ENCODE measurements at regions of chr7 and their contacts with region 1.

Region 1: GRCh38 chr7:105691733-105692564 is 110.7 kb upstream of the EFCAB10 start:
- DNase-seq: peak; percentile 84 to 95 (median 91)
- H3K4me3 ChIP-seq: peak overlapping the region; percentile 71 to 75
- H3K4me3 Mint-ChIP-seq: peak overlapping the region; percentile 91 to 98 (median 94)
- H3K27ac ChIP-seq: peak overlapping the region; percentile 89
- H3K27ac Mint-ChIP-seq: peak overlapping the region; percentile 96 to 100 (median 98)
- H3K4me1 ChIP-seq: peaks cover 44% of the 10 kb centered on the region
- H3K4me1 Mint-ChIP-seq: peaks cover 29 to 78% (median 57%) of the 10 kb centered on the region in 4 donors
- H3K27me3 ChIP-seq: no peaks in the 10 kb centered on the region
- H3K27me3 Mint-ChIP-seq: no peaks in the 10 kb centered on the region

Region 2: DNA sequence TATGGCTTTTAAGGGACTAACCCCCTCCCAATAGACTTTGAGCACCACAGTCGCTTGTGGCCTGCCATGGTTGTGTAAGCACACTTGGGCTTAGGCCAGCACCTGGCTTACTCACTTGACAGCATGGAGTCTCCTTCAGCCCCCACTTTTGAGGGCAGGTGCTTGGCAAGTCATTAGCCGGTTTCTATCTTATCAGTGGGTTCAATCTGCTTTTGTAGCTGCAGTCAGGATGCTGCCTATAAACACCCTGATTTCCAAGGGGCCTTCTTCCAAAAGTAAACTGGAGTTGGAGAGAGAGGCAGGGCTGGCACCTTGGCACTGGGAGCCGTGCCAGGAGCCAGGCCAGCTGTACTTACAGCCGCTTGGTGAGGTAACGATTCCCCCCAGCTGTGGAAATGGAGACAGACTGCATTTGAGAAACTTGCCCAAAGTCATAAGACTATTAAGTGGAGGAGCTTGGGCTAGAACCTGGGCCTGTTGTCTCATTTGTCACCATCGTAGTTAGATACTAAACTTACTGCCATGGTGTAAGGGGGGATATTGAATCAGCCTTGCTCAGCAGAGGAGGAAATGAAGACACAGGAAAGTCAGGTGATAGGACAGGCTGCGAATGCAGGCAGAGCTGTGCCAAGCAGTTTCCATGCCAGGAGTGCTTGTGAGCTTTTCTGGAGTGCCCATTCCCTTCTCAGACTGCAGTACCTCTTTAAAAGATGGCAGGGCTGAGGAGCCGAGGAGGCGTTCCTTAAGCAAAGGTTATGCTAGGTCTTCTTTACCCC is 18.4 kb before region 1 on chr7:
- CTCF ChIA-PET with region 1: interaction called, 14 read pairs
- POLR2A ChIA-PET with region 1: interaction called, 113 read pairs
- intact Hi-C with region 1: loop called (anchors 1 kb)
- DNase-seq: peak in 1 of 5 donors; percentile 61
- H3K4me3 ChIP-seq: no peak overlapping the region
- H3K4me3 Mint-ChIP-seq: peak overlapping the region in 6 of 8 donors; percentile 3 to 78 (median 24)
- H3K27ac ChIP-seq: peak overlapping the region; percentile 36
- H3K27ac Mint-ChIP-seq: peak overlapping the region; percentile 58 to 97 (median 85)
- H3K4me1 ChIP-seq: peaks cover 63% of the 10 kb centered on the region
- H3K4me1 Mint-ChIP-seq: peaks cover 49 to 73% (median 62%) of the 10 kb centered on the region in 4 donors
- H3K27me3 ChIP-seq: no peaks in the 10 kb centered on the region
- H3K27me3 Mint-ChIP-seq: no peaks in the 10 kb centered on the region

Region 3: DNA sequence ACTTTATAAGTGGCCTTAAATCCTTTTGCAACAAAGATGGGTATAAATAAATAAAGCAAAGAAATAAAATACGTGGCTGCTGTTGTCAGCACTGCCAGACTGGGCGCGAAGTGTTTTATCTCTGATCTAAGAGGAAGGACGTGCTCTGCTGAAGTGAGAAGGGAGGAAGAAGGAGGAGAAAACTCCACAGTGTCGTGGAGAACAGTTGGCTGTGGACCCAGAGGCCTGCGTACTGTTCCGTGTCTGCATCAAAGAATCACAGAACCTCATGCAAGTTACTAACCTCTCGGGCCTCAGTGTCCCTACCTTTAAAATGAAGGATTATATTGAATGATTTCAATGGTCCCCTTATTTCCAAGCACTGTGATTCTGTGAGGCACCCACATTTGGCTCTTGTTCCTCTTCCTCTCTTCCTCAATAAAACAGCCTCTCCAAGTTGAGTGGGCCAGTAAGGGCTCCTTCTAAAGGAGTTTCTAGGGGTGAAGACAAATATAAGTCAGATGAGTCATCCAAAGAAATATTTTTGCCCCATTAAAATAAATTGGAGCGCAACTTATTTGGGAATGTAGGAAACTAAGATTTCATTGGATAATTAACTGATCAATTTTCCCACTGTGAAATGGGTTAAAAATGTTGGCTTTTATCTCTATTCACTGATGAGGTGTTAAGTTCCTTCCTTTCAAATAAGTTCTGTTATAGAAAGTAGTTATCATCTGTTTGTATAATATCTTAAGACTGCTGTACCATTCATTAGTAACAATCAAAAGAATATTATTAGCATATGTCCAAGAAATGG is 16.2 kb after region 1 on chr7:
- CTCF ChIA-PET with region 1: interaction called, 4 read pairs
- POLR2A ChIA-PET with region 1: interaction called, 6 read pairs
- intact Hi-C with region 1: loop called (anchors 2 kb)
- DNase-seq: peak in 3 of 5 donors; percentile 20 to 25 (median 24)
- H3K4me3 ChIP-seq: no peak overlapping the region
- H3K4me3 Mint-ChIP-seq: peak overlapping the region; percentile 45 to 84 (median 60)
- H3K27ac ChIP-seq: no peak overlapping the region
- H3K27ac Mint-ChIP-seq: peak overlapping the region; percentile 11 to 81 (median 66)
- H3K4me1 ChIP-seq: peaks cover 19% of the 10 kb centered on the region
- H3K4me1 Mint-ChIP-seq: peaks cover 15 to 21% (median 18%) of the 10 kb centered on the region in 4 donors
- H3K27me3 ChIP-seq: no peaks in the 10 kb centered on the region
- H3K27me3 Mint-ChIP-seq: no peaks in the 10 kb centered on the region

Region 4: GRCh38 chr7:105849122-105849855 is 157.3 kb after region 1 on chr7:
- CTCF ChIA-PET with region 1: no interaction called
- POLR2A ChIA-PET with region 1: interaction called, 19 read pairs
- intact Hi-C with region 1: no loop called
- DNase-seq: peak; percentile 63 to 81 (median 71)
- H3K4me3 ChIP-seq: peak overlapping the region; percentile 16 to 18
- H3K4me3 Mint-ChIP-seq: peak overlapping the region; percentile 60 to 87 (median 78)
- H3K27ac ChIP-seq: peak overlapping the region; percentile 35
- H3K27ac Mint-ChIP-seq: peak overlapping the region; percentile 74 to 96 (median 94)
- H3K4me1 ChIP-seq: peaks cover 58% of the 10 kb centered on the region
- H3K4me1 Mint-ChIP-seq: peaks cover 56 to 65% (median 58%) of the 10 kb centered on the region in 4 donors
- H3K27me3 ChIP-seq: no peaks in the 10 kb centered on the region
- H3K27me3 Mint-ChIP-seq: no peaks in the 10 kb centered on the region

Region 5: GRCh38 chr7:106022193-106022821 is 330.4 kb after region 1 on chr7:
- CTCF ChIA-PET with region 1: interaction called, 4 read pairs
- POLR2A ChIA-PET with region 1: interaction called, 23 read pairs
- intact Hi-C with region 1: loop called (anchors 1 kb)
- DNase-seq: peak; percentile 89 to 92 (median 91)
- H3K4me3 ChIP-seq: peak overlapping the region in 1 of 2 donors; percentile 48
- H3K4me3 Mint-ChIP-seq: peak overlapping the region; percentile 5 to 82 (median 72)
- H3K27ac ChIP-seq: peak overlapping the region; percentile 48
- H3K27ac Mint-ChIP-seq: peak overlapping the region; percentile 88 to 99 (median 98)
- H3K4me1 ChIP-seq: peaks cover 52% of the 10 kb centered on the region
- H3K4me1 Mint-ChIP-seq: peaks cover 38 to 70% (median 48%) of the 10 kb centered on the region in 4 donors
- H3K27me3 ChIP-seq: no peaks in the 10 kb centered on the region
- H3K27me3 Mint-ChIP-seq: no peaks in the 10 kb centered on the region

Region 6: DNA sequence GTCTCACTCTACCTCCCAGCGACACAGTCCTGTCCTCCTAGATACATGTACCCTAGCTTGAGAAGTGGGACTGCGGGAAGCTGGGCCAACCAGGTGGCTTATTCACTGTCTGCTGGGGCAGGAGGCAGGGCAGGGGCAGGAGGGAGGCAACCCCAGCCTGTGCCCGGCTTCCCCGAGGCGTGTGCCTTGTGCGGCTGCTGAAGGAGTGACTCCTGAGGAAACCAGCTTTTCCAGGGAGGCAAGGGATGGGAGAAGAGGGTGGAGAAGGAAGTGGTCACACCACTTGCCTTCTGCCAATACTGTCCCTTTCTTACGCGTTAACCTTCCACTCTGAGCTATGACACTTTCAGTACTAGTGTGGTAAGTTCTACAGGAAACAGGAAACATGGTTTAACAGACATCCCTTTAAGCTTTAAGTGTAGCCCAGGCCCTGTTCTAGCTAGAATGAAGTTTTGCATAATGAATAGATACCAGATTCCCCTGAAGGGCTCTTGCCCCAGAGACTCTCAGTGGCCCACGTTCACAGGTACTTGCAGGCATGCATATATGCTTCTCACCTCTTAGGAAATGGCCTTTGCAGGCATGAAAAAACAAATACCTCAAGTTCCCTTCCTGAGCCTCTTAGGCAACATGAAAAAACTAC is 379.5 kb after region 1 on chr7:
- CTCF ChIA-PET with region 1: no interaction called
- POLR2A ChIA-PET with region 1: interaction called, 12 read pairs
- intact Hi-C with region 1: no loop called
- DNase-seq: peak; percentile 54 to 69 (median 63)
- H3K4me3 ChIP-seq: peak overlapping the region in 1 of 2 donors; percentile 49
- H3K4me3 Mint-ChIP-seq: peak overlapping the region; percentile 73 to 86 (median 82)
- H3K27ac ChIP-seq: peak overlapping the region; percentile 52
- H3K27ac Mint-ChIP-seq: peak overlapping the region; percentile 86 to 95 (median 94)
- H3K4me1 ChIP-seq: peaks cover 43% of the 10 kb centered on the region
- H3K4me1 Mint-ChIP-seq: peaks cover 28 to 62% (median 42%) of the 10 kb centered on the region in 4 donors
- H3K27me3 ChIP-seq: no peaks in the 10 kb centered on the region
- H3K27me3 Mint-ChIP-seq: no peaks in the 10 kb centered on the region